Panc1 (cell line): ENCODE measurements at regions of chr3 and their contacts with region 1.

Region 1: GRCh38 chr3:4837374-4837930 is 141.8 kb upstream of the BHLHE40 start:
- DNase-seq: no peak
- ATAC-seq: no peak
- H3K4me3 ChIP-seq: no peak overlapping the region
- H3K27ac ChIP-seq: no peak overlapping the region
- H3K4me1 ChIP-seq: no peaks in the 10 kb centered on the region
- H3K27me3 ChIP-seq: no peaks in the 10 kb centered on the region
- CTCF ChIP-seq: no peak

Region 2: GRCh38 chr3:4853749-4854140 is 16.3 kb after region 1 on chr3:
- CTCF ChIA-PET with region 1: no interaction called
- POLR2A ChIA-PET with region 1: interaction called, 10 read pairs
- in situ Hi-C with region 1: no loop called
- intact Hi-C with region 1: no loop called
- DNase-seq: no peak
- ATAC-seq: no peak
- H3K4me3 ChIP-seq: no peak overlapping the region
- H3K27ac ChIP-seq: no peak overlapping the region
- H3K4me1 ChIP-seq: no peaks in the 10 kb centered on the region
- H3K27me3 ChIP-seq: no peaks in the 10 kb centered on the region
- CTCF ChIP-seq: no peak